Esophagus squamous epithelium (tissue), 5 donors: ENCODE measurements at regions of chr11 and their contacts with region 1.

Region 1: GRCh38 chr11:64000026-64000739 is 13.9 kb downstream of the OTUB1 start:
- DNase-seq: no peak
- H3K4me3 ChIP-seq: peak overlapping the region; percentile 25 to 64 (median 36)
- H3K27ac ChIP-seq: peak overlapping the region in 3 of 4 donors; percentile 58 to 84 (median 72)
- H3K4me1 ChIP-seq: peaks cover 32 to 58% (median 39%) of the 10 kb centered on the region in 3 donors
- H3K27me3 ChIP-seq: peaks cover 0 to 4% (median 0%) of the 10 kb centered on the region in 4 donors
- CTCF ChIP-seq: peak; percentile 76 to 95 (median 90)
- POLR2A ChIP-seq: no peak

Region 2: GRCh38 chr11:63961608-63962412 is 38.4 kb before region 1 on chr11:
- intact Hi-C with region 1: no loop called
- DNase-seq: no peak
- H3K4me3 ChIP-seq: no peak overlapping the region
- H3K27ac ChIP-seq: no peak overlapping the region
- H3K4me1 ChIP-seq: peaks cover 8 to 48% (median 18%) of the 10 kb centered on the region in 3 donors
- H3K27me3 ChIP-seq: no peaks in the 10 kb centered on the region
- CTCF ChIP-seq: no peak
- POLR2A ChIP-seq: no peak

Region 3: GRCh38 chr11:64088162-64089026 is 88.2 kb after region 1 on chr11:
- intact Hi-C with region 1: no loop called
- DNase-seq: no peak
- H3K4me3 ChIP-seq: no peak overlapping the region
- H3K27ac ChIP-seq: no peak overlapping the region
- H3K4me1 ChIP-seq: peaks cover 0 to 27% (median 0%) of the 10 kb centered on the region in 3 donors
- H3K27me3 ChIP-seq: no peaks in the 10 kb centered on the region
- CTCF ChIP-seq: peak in 5 of 6 experiments; percentile 15 to 52 (median 22)
- POLR2A ChIP-seq: no peak

Region 4: GRCh38 chr11:64148200-64148916 is 148.2 kb after region 1 on chr11:
- intact Hi-C with region 1: loop called (anchors 2 kb)
- DNase-seq: no peak
- H3K4me3 ChIP-seq: peak overlapping the region in 3 of 4 donors; percentile 19 to 53 (median 24)
- H3K27ac ChIP-seq: peak overlapping the region in 2 of 4 donors; percentile 48 to 50
- H3K4me1 ChIP-seq: peaks cover 3 to 35% (median 13%) of the 10 kb centered on the region in 3 donors
- H3K27me3 ChIP-seq: no peaks in the 10 kb centered on the region
- CTCF ChIP-seq: peak; percentile 85 to 96 (median 94)
- POLR2A ChIP-seq: no peak